Activated CD8-positive, alpha-beta memory T cell treated with anti-CD3 and anti-CD28 coated beads, Interleukin-2, amount 10 ng/mL, durations not matched to agents 7 days and 5 days (primary cell): ENCODE measurements at regions of chr3 and their contacts with region 1.

Region 1: DNA sequence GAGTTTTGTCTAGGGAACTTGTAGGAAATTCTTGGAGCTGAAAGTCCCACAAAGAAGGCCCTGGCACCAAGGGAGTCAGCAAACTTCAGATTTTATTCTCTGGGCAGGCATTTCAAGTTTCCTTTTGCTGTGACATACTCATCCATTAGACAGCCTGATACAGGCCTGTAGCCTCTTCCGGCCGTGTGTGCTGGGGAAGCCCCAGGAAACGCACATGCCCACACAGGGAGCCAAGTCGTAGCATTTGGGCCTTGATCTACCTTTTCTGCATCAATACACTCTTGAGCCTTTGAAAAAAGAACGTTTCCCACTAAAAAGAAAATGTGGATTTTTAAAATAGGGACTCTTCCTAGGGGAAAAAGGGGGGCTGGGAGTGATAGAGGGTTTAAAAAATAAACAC is 15.0 kb downstream of the TIGIT start:
- DNase-seq: peak; percentile 84
- ATAC-seq: peak; percentile 87
- H3K4me3 Mint-ChIP-seq: peak overlapping the region; percentile 54
- H3K27ac Mint-ChIP-seq: peak overlapping the region; percentile 95
- H3K4me1 Mint-ChIP-seq: peaks cover 82% of the 10 kb centered on the region
- H3K27me3 Mint-ChIP-seq: no peaks in the 10 kb centered on the region

Region 2: GRCh38 chr3:114223143-114223542 is 85.7 kb before region 1 on chr3:
- CTCF ChIA-PET with region 1: interaction called, 10 read pairs
- DNase-seq: peak; percentile 56
- ATAC-seq: peak; percentile 52
- H3K4me3 Mint-ChIP-seq: peak overlapping the region; percentile 3
- H3K27ac Mint-ChIP-seq: peak overlapping the region; percentile 98
- H3K4me1 Mint-ChIP-seq: peaks cover 89% of the 10 kb centered on the region
- H3K27me3 Mint-ChIP-seq: no peaks in the 10 kb centered on the region